ENCODE measurements at regions of chr7 and their contacts with region 1.

Region 1: GRCh38 chr7:44240983-44241510 is 40.3 kb downstream of the YKT6 start:
- DNase-seq: peak; percentile 74
- H3K4me3 ChIP-seq: peak overlapping the region in 2 of 4 donors; percentile 13 to 30
- H3K27ac ChIP-seq: no peak overlapping the region
- H3K4me1 ChIP-seq: peaks cover 0 to 6% (median 2%) of the 10 kb centered on the region in 4 donors
- H3K27me3 ChIP-seq: no peaks in the 10 kb centered on the region
- CTCF ChIP-seq: peak; percentile 55 to 72 (median 65)
- EP300 ChIP-seq: no peak
- POLR2A ChIP-seq: no peak

Region 2: GRCh38 chr7:43692582-43693373 is 548.3 kb before region 1 on chr7:
- in situ Hi-C with region 1: no loop called
- intact Hi-C with region 1: no loop called
- DNase-seq: no peak
- H3K4me3 ChIP-seq: no peak overlapping the region
- H3K27ac ChIP-seq: no peak overlapping the region
- H3K4me1 ChIP-seq: peaks cover 0 to 8% (median 0%) of the 10 kb centered on the region in 4 donors
- H3K27me3 ChIP-seq: no peaks in the 10 kb centered on the region
- CTCF ChIP-seq: no peak
- EP300 ChIP-seq: no peak
- POLR2A ChIP-seq: no peak

Region 3: DNA sequence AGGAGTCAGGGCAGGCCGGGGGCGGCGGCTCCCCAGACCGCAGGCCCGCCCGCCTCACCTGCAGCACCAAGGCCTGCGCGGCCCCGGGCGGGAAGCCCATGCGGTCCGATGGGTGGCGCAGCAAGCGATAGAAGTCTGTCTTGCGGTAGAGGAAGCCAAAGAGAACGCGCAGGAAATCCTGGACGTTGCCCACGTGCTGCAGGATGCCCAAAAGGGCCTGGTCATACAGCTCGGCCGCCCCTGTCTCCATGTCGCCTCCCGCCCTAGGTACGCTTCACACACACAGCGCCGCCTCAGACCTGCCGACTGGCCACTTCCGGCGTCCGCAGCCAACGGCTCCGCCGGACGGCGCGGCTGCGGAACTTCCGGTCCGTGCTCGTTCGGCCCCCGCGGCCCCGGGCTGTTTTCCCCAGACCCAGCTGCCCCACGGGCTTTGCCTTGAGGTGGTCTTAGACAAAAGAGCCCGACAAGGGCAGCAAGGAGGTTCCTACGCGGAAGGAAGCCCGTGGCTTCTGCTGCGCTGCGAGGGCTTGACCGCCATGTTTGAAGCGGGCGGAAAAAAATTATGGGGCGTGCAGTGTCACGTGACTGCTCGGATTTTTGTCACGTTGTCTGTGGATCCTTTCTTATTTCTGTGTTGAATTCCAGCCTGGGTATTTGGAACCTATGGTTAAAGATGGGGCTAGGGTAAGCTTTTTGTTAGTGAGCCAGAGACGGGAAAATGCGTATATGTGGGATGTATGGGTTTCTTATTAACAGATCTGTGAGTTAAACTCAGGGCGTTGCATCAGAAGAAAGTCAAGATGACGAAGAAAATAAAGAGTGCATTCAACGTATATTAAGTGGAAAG is 249.5 kb after region 1 on chr7 and contains the start of gene NUDCD3:
- in situ Hi-C with region 1: loop called in 2 of 4 experiments (anchors 25 kb)
- intact Hi-C with region 1: loop called (anchors 10 kb)
- DNase-seq: peak; percentile 87
- H3K4me3 ChIP-seq: peak within 1 kb of the TSS; percentile 48 to 89 (median 70)
- H3K27ac ChIP-seq: peak within 1 kb of the TSS; percentile 92 to 98 (median 94)
- H3K4me1 ChIP-seq: peaks cover 9 to 46% (median 31%) of the 10 kb centered on the region in 4 donors
- H3K27me3 ChIP-seq: peaks cover 9% of the 10 kb centered on the region
- CTCF ChIP-seq: peak in 2 of 5 experiments; percentile 2 to 25
- EP300 ChIP-seq: no peak
- POLR2A ChIP-seq: peak; percentile 65
- total RNA-seq, gene NUDCD3: 31.9 to 76.7 (median 38.6) TPM

Region 4: GRCh38 chr7:44565097-44565794 is 324.2 kb after region 1 on chr7:
- in situ Hi-C with region 1: loop called in 1 of 4 experiments (anchors 25 kb)
- intact Hi-C with region 1: loop called (anchors 10 kb)
- DNase-seq: peak; percentile 75
- H3K4me3 ChIP-seq: no peak overlapping the region
- H3K27ac ChIP-seq: no peak overlapping the region
- H3K4me1 ChIP-seq: peaks cover 0 to 9% (median 3%) of the 10 kb centered on the region in 4 donors
- H3K27me3 ChIP-seq: no peaks in the 10 kb centered on the region
- CTCF ChIP-seq: peak; percentile 94 to 99 (median 99)
- EP300 ChIP-seq: no peak
- POLR2A ChIP-seq: no peak

Region 5: GRCh38 chr7:44573464-44574286 is 332.6 kb after region 1 on chr7 and contains the start of gene DDX56:
- in situ Hi-C with region 1: loop called in 1 of 4 experiments (anchors 25 kb)
- intact Hi-C with region 1: loop called (anchors 10 kb)
- DNase-seq: peak; percentile 95
- H3K4me3 ChIP-seq: peak within 1 kb of the TSS; percentile 60 to 88 (median 76)
- H3K27ac ChIP-seq: peak within 1 kb of the TSS; percentile 88 to 90 (median 90)
- H3K4me1 ChIP-seq: peaks cover 17 to 26% (median 17%) of the 10 kb centered on the region in 4 donors
- H3K27me3 ChIP-seq: no peaks in the 10 kb centered on the region
- CTCF ChIP-seq: peak in 1 of 5 experiments; percentile 6
- EP300 ChIP-seq: no peak
- POLR2A ChIP-seq: peak; percentile 87
- total RNA-seq, gene DDX56: 41.1 to 202 (median 42.3) TPM

Measured in transverse colon (tissue), 4 donors.